B cell (primary cell): ENCODE measurements at regions of chr3 and their contacts with region 1.

Region 1: GRCh38 chr3:186849374-186849975 is 7.0 kb downstream of the ADIPOQ start:
- DNase-seq: peak; percentile 81
- ATAC-seq: peak; percentile 88
- H3K4me3 ChIP-seq: no peak overlapping the region
- H3K4me3 Mint-ChIP-seq: no peak overlapping the region
- H3K27ac ChIP-seq: no peak overlapping the region
- H3K27ac Mint-ChIP-seq: no peak overlapping the region
- H3K4me1 ChIP-seq: peaks cover 9 to 11% of the 10 kb centered on the region in 2 donors
- H3K4me1 Mint-ChIP-seq: peaks cover 13% of the 10 kb centered on the region
- H3K27me3 ChIP-seq: no peaks in the 10 kb centered on the region
- H3K27me3 Mint-ChIP-seq: peaks cover 16% of the 10 kb centered on the region
- CTCF ChIP-seq: peak; percentile 70

Region 2: GRCh38 chr3:186826976-186827731 is 22.3 kb before region 1 on chr3:
- CTCF ChIA-PET with region 1: interaction called, 15 read pairs
- POLR2A ChIA-PET with region 1: interaction called, 5 read pairs
- intact Hi-C with region 1: no loop called
- DNase-seq: peak; percentile 92
- ATAC-seq: peak; percentile 95
- H3K4me3 ChIP-seq: peak overlapping the region in 4 of 5 experiments; percentile 57 to 78 (median 70)
- H3K4me3 Mint-ChIP-seq: peak overlapping the region; percentile 79
- H3K27ac ChIP-seq: peak overlapping the region in 1 of 2 donors; percentile 55
- H3K27ac Mint-ChIP-seq: peak overlapping the region; percentile 41
- H3K4me1 ChIP-seq: peaks cover 24 to 28% of the 10 kb centered on the region in 2 donors
- H3K4me1 Mint-ChIP-seq: peaks cover 21% of the 10 kb centered on the region
- H3K27me3 ChIP-seq: peaks cover 0 to 69% (median 42%) of the 10 kb centered on the region in 4 experiments
- H3K27me3 Mint-ChIP-seq: peaks cover 54% of the 10 kb centered on the region
- CTCF ChIP-seq: no peak

Region 3: DNA sequence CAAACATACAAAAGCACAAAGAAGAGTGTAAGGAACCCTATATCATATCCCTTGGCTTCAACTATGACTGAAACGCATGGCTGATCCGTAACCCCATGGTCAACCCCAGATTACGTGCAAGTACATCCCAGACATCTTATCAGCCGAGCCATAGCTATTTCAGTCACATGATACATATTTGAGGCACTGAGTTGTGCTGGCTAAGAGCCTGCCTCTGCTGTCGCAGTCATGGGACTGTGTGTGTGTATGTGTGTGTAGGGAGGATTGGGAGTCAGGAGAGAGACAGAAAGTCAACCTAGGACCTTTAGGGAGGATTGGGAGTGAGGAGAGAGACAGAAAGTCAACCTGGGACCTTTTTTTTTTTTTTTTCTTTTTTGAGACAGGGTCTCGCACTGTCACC is 89.2 kb after region 1 on chr3:
- CTCF ChIA-PET with region 1: interaction called, 109 read pairs
- POLR2A ChIA-PET with region 1: no interaction called
- intact Hi-C with region 1: no loop called
- DNase-seq: no peak
- ATAC-seq: no peak
- H3K4me3 ChIP-seq: no peak overlapping the region
- H3K4me3 Mint-ChIP-seq: no peak overlapping the region
- H3K27ac ChIP-seq: peak overlapping the region in 1 of 2 donors; percentile 43
- H3K27ac Mint-ChIP-seq: peak overlapping the region; percentile 46
- H3K4me1 ChIP-seq: peaks cover 6 to 26% of the 10 kb centered on the region in 2 donors
- H3K4me1 Mint-ChIP-seq: peaks cover 64% of the 10 kb centered on the region
- H3K27me3 ChIP-seq: no peaks in the 10 kb centered on the region
- H3K27me3 Mint-ChIP-seq: no peaks in the 10 kb centered on the region
- CTCF ChIP-seq: no peak

Region 4: GRCh38 chr3:187000711-187001151 is 151.3 kb after region 1 on chr3:
- CTCF ChIA-PET with region 1: interaction called, 4 read pairs
- POLR2A ChIA-PET with region 1: interaction called, 3 read pairs
- intact Hi-C with region 1: loop called (anchors 5 kb)
- DNase-seq: peak; percentile 86
- ATAC-seq: peak; percentile 77
- H3K4me3 ChIP-seq: peak overlapping the region in 3 of 5 experiments; percentile 12 to 32 (median 22)
- H3K4me3 Mint-ChIP-seq: peak overlapping the region; percentile 88
- H3K27ac ChIP-seq: peak overlapping the region; percentile 94 to 98
- H3K27ac Mint-ChIP-seq: peak overlapping the region; percentile 99
- H3K4me1 ChIP-seq: peaks cover 82 to 93% of the 10 kb centered on the region in 2 donors
- H3K4me1 Mint-ChIP-seq: peaks cover 87% of the 10 kb centered on the region
- H3K27me3 ChIP-seq: no peaks in the 10 kb centered on the region
- H3K27me3 Mint-ChIP-seq: no peaks in the 10 kb centered on the region
- CTCF ChIP-seq: no peak

Region 5: GRCh38 chr3:187066228-187066995 is 216.9 kb after region 1 on chr3:
- CTCF ChIA-PET with region 1: interaction called, 24 read pairs
- POLR2A ChIA-PET with region 1: no interaction called
- intact Hi-C with region 1: loop called (anchors 1 kb)
- DNase-seq: peak; percentile 87
- ATAC-seq: peak; percentile 31
- H3K4me3 ChIP-seq: peak overlapping the region in 3 of 5 experiments; percentile 19 to 45 (median 26)
- H3K4me3 Mint-ChIP-seq: peak overlapping the region; percentile 81
- H3K27ac ChIP-seq: peak overlapping the region; percentile 97 to 98
- H3K27ac Mint-ChIP-seq: peak overlapping the region; percentile 97
- H3K4me1 ChIP-seq: peaks cover 70 to 86% of the 10 kb centered on the region in 2 donors
- H3K4me1 Mint-ChIP-seq: peaks cover 87% of the 10 kb centered on the region
- H3K27me3 ChIP-seq: no peaks in the 10 kb centered on the region
- H3K27me3 Mint-ChIP-seq: no peaks in the 10 kb centered on the region
- CTCF ChIP-seq: peak; percentile 40

Region 6: GRCh38 chr3:187150599-187150998 is 301.1 kb after region 1 on chr3:
- CTCF ChIA-PET with region 1: interaction called, 110 read pairs
- POLR2A ChIA-PET with region 1: no interaction called
- intact Hi-C with region 1: loop called (anchors 1 kb)
- DNase-seq: peak; percentile 70
- ATAC-seq: peak; percentile 70
- H3K4me3 ChIP-seq: no peak overlapping the region
- H3K4me3 Mint-ChIP-seq: no peak overlapping the region
- H3K27ac ChIP-seq: no peak overlapping the region
- H3K27ac Mint-ChIP-seq: no peak overlapping the region
- H3K4me1 ChIP-seq: no peaks in the 10 kb centered on the region
- H3K4me1 Mint-ChIP-seq: peaks cover 3% of the 10 kb centered on the region
- H3K27me3 ChIP-seq: no peaks in the 10 kb centered on the region
- H3K27me3 Mint-ChIP-seq: peaks cover 6% of the 10 kb centered on the region
- CTCF ChIP-seq: peak; percentile 75